Caco-2 (cell line): ENCODE measurements at regions of chr15 and their contacts with region 1.

Region 1: DNA sequence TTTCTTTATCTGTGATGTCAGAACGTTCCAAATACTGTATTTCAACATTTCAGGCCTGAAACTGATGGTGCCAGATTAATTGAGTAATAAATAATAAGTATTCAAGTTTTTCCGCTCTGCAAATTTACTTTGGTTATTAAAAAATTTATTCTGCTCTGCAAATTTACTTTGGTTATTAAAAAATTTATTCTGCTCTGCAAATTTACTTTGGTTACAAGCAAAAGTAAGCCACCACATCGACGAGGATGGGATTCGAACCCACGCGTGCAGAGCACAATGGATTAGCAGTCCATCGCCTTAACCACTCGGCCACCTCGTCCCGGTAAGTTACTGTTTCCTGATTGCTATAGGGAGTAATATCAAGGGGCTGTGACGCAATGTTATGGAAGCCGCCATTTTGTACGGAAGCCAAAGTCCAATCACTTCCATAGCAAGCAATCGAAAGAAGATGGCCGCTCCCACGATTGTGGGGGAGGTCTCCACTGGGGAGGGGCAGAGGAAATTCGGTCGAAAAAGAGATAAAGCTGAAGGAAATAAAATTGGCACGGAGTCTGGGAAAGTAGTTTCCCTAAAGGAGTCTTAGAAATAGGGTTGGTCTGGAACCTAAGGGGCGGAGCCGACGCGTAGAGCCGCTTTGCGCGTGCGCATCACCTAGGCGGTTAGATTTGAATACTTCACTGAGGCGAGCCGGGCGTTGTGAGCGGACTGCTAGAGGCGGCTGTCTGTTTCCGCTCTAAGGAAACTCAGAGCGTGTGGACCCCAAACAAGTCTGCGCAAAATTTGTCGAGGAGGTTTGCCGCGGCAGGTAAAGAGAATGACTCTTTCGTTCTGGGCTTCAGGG is at the start of gene KNL1:
- DNase-seq: peak; percentile 89 to 94
- H3K4me3 ChIP-seq: peak within 1 kb of the TSS; percentile 93
- H3K4me3 Mint-ChIP-seq: peak within 1 kb of the TSS; percentile 99
- H3K27ac Mint-ChIP-seq: peak within 1 kb of the TSS; percentile 100
- H3K4me1 ChIP-seq: peaks cover 8% of the 10 kb centered on the region; the same call in 1 of the 2 replicates
- H3K4me1 Mint-ChIP-seq: peaks cover 29% of the 10 kb centered on the region
- H3K27me3 ChIP-seq: no peaks in the 10 kb centered on the region
- H3K27me3 Mint-ChIP-seq: no peaks in the 10 kb centered on the region
- CTCF ChIP-seq: no peak
- total RNA-seq, gene KNL1: 24.8 and 29.5 TPM in 2 replicates

Region 2: GRCh38 chr15:40398413-40398873 is 195.4 kb before region 1 on chr15:
- CTCF ChIA-PET with region 1: no interaction called
- POLR2A ChIA-PET with region 1: no interaction called
- intact Hi-C with region 1: no loop called
- DNase-seq: no peak
- H3K4me3 ChIP-seq: no peak overlapping the region
- H3K4me3 Mint-ChIP-seq: no peak overlapping the region
- H3K27ac Mint-ChIP-seq: no peak overlapping the region
- H3K4me1 ChIP-seq: no peaks in the 10 kb centered on the region
- H3K4me1 Mint-ChIP-seq: no peaks in the 10 kb centered on the region
- H3K27me3 ChIP-seq: no peaks in the 10 kb centered on the region
- H3K27me3 Mint-ChIP-seq: no peaks in the 10 kb centered on the region
- CTCF ChIP-seq: no peak

Region 3: DNA sequence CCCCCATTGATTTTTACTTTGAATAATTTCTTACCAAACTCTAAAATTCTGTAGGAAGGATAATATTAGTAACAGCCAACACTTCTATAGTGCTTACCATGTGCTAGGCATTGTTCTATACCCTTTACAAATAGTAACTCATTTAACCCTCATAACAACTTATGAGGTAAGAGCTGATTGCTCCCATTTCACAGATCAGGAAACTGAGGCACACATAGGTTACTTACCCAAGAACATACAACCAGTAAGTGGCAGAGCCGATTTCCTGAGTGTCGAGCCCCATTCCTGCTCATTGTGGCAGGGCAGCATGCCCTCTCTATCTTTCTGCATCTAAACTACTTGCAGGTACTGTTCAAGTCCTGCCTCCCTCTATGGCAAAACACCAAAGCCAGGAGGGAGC is 37.9 kb before region 1 on chr15:
- CTCF ChIA-PET with region 1: no interaction called
- POLR2A ChIA-PET with region 1: no interaction called
- intact Hi-C with region 1: no loop called
- DNase-seq: no peak
- H3K4me3 ChIP-seq: no peak overlapping the region
- H3K4me3 Mint-ChIP-seq: no peak overlapping the region
- H3K27ac Mint-ChIP-seq: no peak overlapping the region
- H3K4me1 ChIP-seq: no peaks in the 10 kb centered on the region
- H3K4me1 Mint-ChIP-seq: no peaks in the 10 kb centered on the region
- H3K27me3 ChIP-seq: no peaks in the 10 kb centered on the region
- H3K27me3 Mint-ChIP-seq: no peaks in the 10 kb centered on the region
- CTCF ChIP-seq: no peak

Region 4: GRCh38 chr15:40582726-40583246 is 11.0 kb before region 1 on chr15:
- CTCF ChIA-PET with region 1: interaction called, 11 read pairs
- POLR2A ChIA-PET with region 1: no interaction called
- intact Hi-C with region 1: no loop called
- DNase-seq: peak; percentile 81 to 85
- H3K4me3 ChIP-seq: peak overlapping the region; percentile 42
- H3K4me3 Mint-ChIP-seq: peak overlapping the region; percentile 87
- H3K27ac Mint-ChIP-seq: peak overlapping the region; percentile 88
- H3K4me1 ChIP-seq: 0 out of 2 replicates have a peak, but pooled peaks cover 3% of the 10 kb centered on the region
- H3K4me1 Mint-ChIP-seq: peaks cover 7% of the 10 kb centered on the region
- H3K27me3 ChIP-seq: no peaks in the 10 kb centered on the region
- H3K27me3 Mint-ChIP-seq: no peaks in the 10 kb centered on the region
- CTCF ChIP-seq: no peak

Region 5: GRCh38 chr15:40694688-40695468 is 101.1 kb after region 1 on chr15 and contains the start of gene RAD51:
- CTCF ChIA-PET with region 1: interaction called, 6 read pairs
- POLR2A ChIA-PET with region 1: interaction called, 3 read pairs
- intact Hi-C with region 1: loop called (anchors 5 kb)
- DNase-seq: peak; percentile 93 to 95
- H3K4me3 ChIP-seq: peak within 1 kb of the TSS; percentile 83
- H3K4me3 Mint-ChIP-seq: peak within 1 kb of the TSS; percentile 92
- H3K27ac Mint-ChIP-seq: peak within 1 kb of the TSS; percentile 99
- H3K4me1 ChIP-seq: peaks cover 11% of the 10 kb centered on the region; the same call in 1 of the 2 replicates
- H3K4me1 Mint-ChIP-seq: peaks cover 7% of the 10 kb centered on the region
- H3K27me3 ChIP-seq: no peaks in the 10 kb centered on the region
- H3K27me3 Mint-ChIP-seq: no peaks in the 10 kb centered on the region
- CTCF ChIP-seq: no peak
- total RNA-seq, gene RAD51: 37.8 and 47.0 TPM in 2 replicates